ENCODE measurements at regions of chr1 and their contacts with region 1.

Region 1: DNA sequence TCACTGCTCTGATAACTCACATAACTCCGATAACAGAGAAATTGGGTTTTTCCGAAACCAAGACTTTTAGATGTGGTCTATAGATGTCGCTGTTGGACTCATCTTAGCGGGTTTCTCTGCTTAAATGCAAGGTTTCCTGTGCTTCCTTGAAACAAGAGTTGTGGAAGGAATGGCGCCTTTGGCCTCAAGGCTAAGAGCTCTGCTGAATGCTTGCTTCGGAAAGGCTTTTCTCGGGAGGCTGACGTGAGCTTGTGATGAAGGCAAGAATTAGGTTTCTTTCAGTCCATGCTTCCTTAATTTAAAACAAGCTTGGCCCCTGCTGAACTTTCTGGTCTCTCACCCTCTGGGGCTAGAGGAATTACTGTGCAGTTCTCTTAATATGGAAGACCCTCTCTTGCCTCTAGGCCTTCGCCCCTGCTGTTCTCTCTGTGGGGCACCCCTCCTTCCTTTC is 113.5 kb downstream of the MAP3K21 start:
- DNase-seq: no peak
- ATAC-seq: peak; percentile 54 to 56
- H3K4me3 ChIP-seq: no peak overlapping the region
- H3K27ac ChIP-seq: no peak overlapping the region
- H3K4me1 ChIP-seq: no peaks in the 10 kb centered on the region
- H3K27me3 ChIP-seq: no peaks in the 10 kb centered on the region

Region 2: GRCh38 chr1:232904566-232904965 is 536.4 kb before region 1 on chr1:
- intact Hi-C with region 1: no loop called
- DNase-seq: no peak
- ATAC-seq: no peak
- H3K4me3 ChIP-seq: no peak overlapping the region
- H3K27ac ChIP-seq: no peak overlapping the region
- H3K4me1 ChIP-seq: peaks cover 3% of the 10 kb centered on the region
- H3K27me3 ChIP-seq: no peaks in the 10 kb centered on the region

Region 3: DNA sequence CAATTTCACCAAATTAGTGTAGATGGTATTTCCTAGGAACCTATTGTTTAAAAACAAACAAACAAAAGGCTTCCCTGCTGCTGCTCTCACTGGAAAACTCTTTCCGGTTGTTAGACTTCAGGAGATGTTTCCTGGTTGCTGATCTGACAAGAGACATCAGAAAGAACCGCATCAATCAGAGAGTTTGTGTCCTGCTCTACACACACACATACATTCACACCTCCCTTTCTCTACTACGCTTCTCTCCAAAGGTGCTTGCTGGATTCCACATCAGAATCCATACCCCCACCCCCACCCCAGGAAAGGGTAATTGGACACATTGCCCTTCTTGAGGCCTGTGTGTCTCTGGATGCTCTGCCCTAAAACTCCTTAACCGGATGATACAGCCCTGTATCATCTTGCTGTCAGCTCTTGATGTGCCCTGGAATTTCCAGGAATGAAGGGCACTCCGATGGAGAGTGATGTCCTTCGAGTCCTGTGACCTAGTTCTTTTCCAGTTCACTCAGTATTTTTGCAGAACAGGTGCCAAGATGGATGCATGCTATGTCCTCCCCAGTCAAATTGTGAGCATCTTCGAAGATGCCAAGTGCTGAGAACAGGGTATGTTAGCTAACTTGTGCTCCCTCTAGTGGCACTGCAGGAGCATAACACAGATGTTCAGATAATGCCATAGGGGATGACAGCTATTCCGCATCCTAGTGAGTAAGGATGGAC is 349.8 kb after region 1 on chr1:
- intact Hi-C with region 1: loop called in 2 of 4 experiments (anchors 5 to 10 kb)
- DNase-seq: no peak
- ATAC-seq: peak; percentile 75 to 81
- H3K4me3 ChIP-seq: no peak overlapping the region
- H3K27ac ChIP-seq: no peak overlapping the region
- H3K4me1 ChIP-seq: no peaks in the 10 kb centered on the region
- H3K27me3 ChIP-seq: no peaks in the 10 kb centered on the region

Region 4: GRCh38 chr1:234065794-234066447 is 624.9 kb after region 1 on chr1:
- intact Hi-C with region 1: loop called in 2 of 4 experiments (anchors 5 to 10 kb)
- DNase-seq: peak; percentile 73 to 92 (median 86)
- ATAC-seq: peak in 1 of 2 donors; percentile 70
- H3K4me3 ChIP-seq: no peak overlapping the region
- H3K27ac ChIP-seq: no peak overlapping the region
- H3K4me1 ChIP-seq: no peaks in the 10 kb centered on the region
- H3K27me3 ChIP-seq: no peaks in the 10 kb centered on the region

Measured in right cardiac atrium (tissue), 5 donors.